ENCODE measurements at regions of chr5 and their contacts with region 1.

Region 1: DNA sequence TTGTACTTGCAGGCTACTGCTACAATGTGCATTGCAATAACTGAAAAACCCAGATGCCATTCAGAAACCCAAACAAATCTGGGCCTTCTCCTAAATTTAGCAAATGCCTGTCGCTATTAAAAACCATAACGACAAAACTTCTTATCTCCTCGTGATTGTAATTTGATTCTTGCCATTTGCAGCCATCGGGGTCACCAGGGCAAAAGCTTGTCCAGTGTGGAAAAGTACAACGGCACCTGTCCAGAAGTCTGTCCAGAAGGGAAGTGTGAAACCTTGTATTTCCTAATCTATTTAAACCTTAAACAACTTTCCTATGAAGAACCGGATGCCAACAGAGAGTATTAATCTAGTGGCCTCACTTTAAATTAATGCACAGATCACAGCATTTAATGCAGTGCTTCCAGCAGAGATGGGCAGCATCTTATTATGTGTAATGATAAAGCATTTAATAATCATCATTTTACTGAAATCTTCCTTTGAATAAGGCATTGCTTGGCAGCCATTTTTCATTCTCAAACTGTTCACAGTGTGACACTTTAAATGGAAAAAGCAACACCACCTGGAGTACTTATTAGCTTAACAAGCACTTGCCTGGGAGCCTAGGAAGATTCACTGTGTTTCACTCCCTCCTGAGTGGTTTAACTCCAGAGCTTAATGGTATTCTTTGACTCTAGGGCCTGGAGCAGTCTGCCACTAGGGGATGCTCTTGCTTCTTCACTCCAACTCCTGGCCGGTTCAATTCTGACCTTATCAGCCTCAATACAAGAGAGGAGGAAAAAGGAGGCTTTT is 4.9 kb upstream of the C7 start:
- DNase-seq: no peak

Region 2: DNA sequence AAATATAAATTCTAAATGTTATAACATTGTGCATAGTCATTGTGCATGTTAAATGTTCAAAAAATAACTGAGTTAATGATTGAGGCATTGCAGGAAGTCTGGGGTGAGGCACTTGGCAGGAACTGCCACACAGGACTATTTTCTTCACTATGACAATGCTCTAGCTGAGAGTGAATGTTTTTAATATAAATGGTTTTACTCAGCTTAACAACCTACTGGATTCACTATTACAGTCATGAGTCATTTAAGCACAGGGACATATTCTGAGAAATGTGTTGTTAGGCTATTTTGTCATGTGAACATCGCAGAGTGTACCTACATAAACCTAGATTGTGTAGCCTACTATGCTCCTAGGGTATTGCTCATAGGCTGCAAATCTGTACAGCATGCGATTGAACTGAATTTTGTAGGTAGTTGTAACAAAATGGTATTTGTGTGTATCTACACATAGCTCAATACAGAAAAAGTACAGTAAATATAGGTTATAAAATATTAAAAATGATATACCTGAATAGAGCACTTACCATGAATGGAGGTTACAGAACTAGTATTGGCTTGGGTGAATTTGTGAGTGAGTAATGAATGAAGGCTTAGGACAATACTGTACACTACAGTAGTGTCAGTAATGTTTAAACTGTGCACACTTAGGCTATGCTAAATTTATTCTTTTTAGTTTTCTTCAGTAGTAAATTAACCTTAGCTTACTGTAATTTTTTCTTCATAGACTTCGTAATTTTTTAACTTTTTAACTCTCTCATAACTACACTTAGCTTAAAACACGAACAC is 570.7 kb before region 1 on chr5:
- intact Hi-C with region 1: no loop called
- DNase-seq: no peak

Region 3: DNA sequence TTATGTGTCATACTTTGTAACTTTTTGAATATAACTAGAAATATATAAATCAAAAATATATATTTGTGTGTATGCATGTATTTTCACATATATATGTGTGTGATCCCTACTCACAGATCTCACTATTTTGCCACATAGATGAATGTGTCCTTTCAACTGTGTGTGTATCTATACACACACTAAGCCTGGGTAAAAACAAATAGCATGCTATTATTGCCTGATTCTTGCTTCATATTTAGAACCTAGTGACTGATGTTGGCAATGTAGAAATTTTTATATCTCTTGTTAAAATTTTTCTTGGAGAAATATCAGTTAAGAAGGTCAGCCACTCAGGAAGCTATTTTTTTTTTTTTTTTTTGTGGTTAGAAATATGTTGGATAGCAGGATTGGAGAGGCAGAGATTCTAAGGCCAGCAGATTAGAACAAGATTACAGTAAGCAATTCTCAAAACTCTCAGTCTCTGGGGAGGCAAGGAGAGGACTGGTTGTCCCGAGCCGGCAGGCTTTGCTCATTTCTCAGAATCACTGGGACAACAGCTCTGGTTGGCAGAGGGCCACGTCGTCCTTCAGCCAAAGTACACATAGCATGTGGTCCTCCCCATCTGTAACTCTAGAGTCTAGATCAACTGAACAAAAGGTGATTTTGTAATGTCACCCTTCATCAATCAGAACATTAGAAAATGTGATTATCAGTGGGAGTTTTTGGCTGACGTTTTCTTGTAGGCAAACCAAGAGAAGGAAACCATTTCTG is 289.2 kb after region 1 on chr5:
- intact Hi-C with region 1: loop called (anchors 2 kb)
- DNase-seq: peak; percentile 95

Region 4: GRCh38 chr5:41346609-41347008 is 442.2 kb after region 1 on chr5:
- intact Hi-C with region 1: loop called (anchors 5 kb)
- DNase-seq: no peak

Region 5: GRCh38 chr5:41641621-41642020 is 737.2 kb after region 1 on chr5:
- intact Hi-C with region 1: loop called (anchors 5 kb)
- DNase-seq: no peak